ENCODE measurements at regions of chr7 and their contacts with region 1.

Region 1: DNA sequence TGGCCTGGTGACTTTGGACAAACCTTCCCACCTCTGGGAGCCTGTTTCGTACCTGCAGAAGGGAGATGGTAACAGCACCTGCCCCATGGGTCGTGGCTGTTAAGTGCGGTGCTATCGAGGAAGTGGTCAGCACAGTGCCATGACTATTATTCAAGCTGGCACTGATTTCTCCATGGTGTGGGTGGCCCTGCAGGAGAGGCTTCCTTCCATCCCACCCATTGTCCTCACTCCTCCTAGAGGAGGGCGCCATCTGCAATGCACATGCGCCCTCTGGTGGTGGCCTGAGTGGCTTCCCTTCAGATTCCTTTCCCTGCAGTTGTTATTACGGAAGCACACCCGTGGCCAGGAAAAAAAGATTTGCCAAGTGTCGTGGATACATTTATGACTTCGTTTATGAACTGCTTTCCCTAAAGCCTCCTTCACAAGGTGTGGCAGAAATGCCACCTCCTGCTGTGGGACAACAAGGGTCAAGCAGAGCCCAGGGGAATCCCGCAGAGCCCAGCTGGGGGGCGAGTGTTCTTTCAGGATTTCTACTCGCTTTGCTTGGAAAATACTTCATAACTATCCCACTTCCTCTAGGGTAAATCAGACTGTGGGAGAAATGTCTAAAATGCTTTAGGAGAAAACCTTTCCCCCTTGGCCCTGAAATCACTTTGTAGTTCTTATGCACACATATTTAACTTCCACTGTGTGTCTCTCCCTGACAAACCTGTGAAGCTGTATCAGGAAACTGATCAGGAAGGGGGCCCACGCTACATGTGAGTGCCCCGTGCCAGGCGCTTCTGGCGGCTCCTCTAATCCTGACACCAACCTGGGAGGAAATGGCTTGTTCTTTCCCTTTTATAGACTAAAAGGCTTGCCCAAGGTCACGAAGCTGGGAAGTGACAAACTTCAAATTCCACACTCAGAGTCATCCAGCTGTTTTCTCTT is 98.0 kb upstream of the ANLN start:
- DNase-seq: peak; percentile 87
- ATAC-seq: peak; percentile 53
- H3K4me3 Mint-ChIP-seq: peak overlapping the region; percentile 54
- H3K27ac Mint-ChIP-seq: peak overlapping the region; percentile 2
- H3K4me1 Mint-ChIP-seq: peaks cover 42% of the 10 kb centered on the region
- H3K27me3 Mint-ChIP-seq: no peaks in the 10 kb centered on the region

Region 2: DNA sequence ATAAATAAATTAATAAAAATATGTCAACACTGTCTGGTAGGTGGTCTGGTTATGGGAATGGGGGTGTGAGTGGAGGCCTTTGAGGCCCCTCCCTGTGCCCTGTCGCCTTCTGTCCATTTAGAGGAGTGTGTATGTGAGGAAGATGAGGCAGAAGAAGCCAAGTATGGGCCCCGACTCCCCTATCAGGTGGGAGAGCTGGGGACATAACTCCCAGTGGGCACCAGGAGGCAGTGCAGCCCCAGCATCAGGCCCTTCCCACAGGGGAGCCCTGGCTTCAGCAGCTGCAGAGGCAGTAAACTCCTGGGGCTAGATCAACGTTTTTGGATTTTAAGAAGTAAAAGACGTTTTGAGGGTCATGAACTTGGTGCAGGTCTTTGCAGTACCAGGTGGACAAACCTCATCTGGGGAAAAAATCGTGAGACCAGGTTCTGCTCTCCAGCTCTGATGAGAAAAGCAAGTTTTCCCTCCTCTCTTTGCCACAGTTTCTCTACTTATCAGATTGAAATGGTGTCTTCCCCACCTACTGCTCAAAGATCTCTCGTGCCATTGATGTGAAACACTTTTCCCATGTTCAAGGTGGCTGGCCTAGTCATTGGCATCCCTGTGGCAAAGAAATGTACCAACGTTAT is 306.4 kb before region 1 on chr7:
- CTCF ChIA-PET with region 1: interaction called, 89 read pairs
- POLR2A ChIA-PET with region 1: no interaction called
- intact Hi-C with region 1: loop called (anchors 1 kb)
- DNase-seq: peak; percentile 87
- ATAC-seq: peak; percentile 100
- H3K4me3 Mint-ChIP-seq: no peak overlapping the region
- H3K27ac Mint-ChIP-seq: no peak overlapping the region
- H3K4me1 Mint-ChIP-seq: no peaks in the 10 kb centered on the region
- H3K27me3 Mint-ChIP-seq: no peaks in the 10 kb centered on the region

Region 3: DNA sequence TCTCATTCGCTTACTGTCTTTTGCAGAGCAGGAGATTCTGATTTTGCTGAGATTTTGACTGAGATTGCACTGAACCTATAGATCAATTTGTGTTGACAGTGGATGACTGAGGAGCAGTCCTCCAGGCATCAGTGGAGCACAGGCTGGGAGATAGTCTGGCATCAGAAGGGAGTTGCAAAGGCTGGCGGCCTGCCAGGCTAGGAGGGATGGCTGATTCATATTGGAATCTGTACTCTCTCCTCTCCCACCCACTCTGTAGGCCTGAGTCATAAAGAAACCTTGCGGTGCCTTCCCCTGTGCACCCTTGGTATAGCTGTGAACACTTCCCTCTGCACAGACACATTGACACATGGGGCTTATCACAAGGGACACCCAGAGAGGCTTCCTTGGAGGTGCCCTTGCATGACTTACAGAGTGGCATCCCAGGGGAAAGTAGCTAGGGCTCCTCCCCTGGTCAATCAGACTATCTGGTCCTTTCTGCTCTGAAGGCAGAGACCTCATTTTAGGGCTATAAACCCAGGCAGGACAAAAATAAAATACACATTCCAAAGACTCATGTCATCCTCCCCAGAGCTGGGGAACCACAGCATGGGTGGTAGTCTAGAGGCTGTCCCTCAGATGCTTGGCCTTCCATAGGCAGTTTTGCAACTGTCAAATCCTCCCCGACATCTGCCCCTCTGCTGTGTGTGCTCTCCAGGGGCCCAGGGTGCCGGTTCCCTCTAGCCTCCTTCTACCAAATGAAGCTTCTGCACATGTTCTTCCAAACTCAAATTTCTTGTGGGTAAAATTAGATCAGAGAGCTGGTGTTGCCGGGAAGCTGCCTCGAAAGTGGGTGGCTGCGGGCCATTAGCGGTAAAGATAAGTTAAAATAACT is 176.0 kb before region 1 on chr7:
- CTCF ChIA-PET with region 1: interaction called, 3 read pairs
- POLR2A ChIA-PET with region 1: no interaction called
- intact Hi-C with region 1: loop called (anchors 1 to 5 kb)
- DNase-seq: peak; percentile 96
- ATAC-seq: peak; percentile 99
- H3K4me3 Mint-ChIP-seq: no peak overlapping the region
- H3K27ac Mint-ChIP-seq: peak overlapping the region; percentile 59
- H3K4me1 Mint-ChIP-seq: peaks cover 35% of the 10 kb centered on the region
- H3K27me3 Mint-ChIP-seq: peaks cover 27% of the 10 kb centered on the region

Region 4: DNA sequence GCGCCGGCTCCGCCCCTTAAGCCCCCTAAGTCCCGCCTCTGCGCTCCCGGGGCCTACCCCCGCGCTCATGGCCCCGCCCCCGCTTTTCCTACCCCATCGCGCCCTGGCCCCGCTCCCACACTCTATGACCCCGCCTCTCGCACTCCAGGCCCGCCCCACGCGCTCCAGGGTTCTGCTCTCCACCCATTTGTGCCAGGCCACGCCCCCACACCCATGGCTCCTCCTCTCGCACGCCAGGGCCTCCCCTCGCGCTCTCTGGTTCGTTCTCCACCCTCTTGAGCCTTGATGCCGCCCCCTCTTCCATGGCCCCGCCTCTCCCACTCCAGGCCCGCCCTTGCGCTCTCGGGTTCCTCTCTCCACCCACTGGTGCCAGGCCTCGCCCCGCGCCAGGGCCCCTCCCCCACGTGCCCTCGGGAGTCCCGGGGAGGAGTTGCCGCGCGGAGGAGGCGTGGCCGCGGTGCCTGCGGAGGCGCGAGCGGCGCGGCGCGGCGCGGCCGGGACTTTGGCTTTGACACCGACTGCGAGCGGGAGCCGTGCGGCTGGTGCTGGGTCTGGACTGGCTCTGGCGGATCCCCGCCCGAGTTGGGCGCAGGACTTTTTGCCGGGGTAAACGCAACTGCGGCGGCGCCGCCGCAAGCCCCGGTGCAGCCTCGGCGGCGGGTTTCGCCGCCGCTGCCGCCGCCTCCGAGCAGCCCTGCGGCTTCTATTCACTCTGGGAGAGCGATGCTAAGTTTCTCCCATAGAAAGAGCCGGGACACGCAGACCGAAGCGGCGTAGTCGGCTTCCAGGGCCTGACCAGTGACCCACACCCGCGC is 138.7 kb before region 1 on chr7 and contains the start of gene EEPD1:
- CTCF ChIA-PET with region 1: no interaction called
- POLR2A ChIA-PET with region 1: no interaction called
- intact Hi-C with region 1: loop called in 1 of 2 experiments (anchors 1 kb)
- DNase-seq: peak; percentile 100
- ATAC-seq: peak; percentile 98
- H3K4me3 Mint-ChIP-seq: peak within 1 kb of the TSS; percentile 71
- H3K27ac Mint-ChIP-seq: peak within 1 kb of the TSS; percentile 43
- H3K4me1 Mint-ChIP-seq: peaks cover 29% of the 10 kb centered on the region
- H3K27me3 Mint-ChIP-seq: no peaks in the 10 kb centered on the region
- total RNA-seq, gene EEPD1: 1.3 TPM

Region 5: GRCh38 chr7:36315309-36316133 is 23.9 kb after region 1 on chr7:
- CTCF ChIA-PET with region 1: interaction called, 13 read pairs
- POLR2A ChIA-PET with region 1: no interaction called
- intact Hi-C with region 1: no loop called
- DNase-seq: no peak
- ATAC-seq: no peak
- H3K4me3 Mint-ChIP-seq: no peak overlapping the region
- H3K27ac Mint-ChIP-seq: no peak overlapping the region
- H3K4me1 Mint-ChIP-seq: peaks cover 2% of the 10 kb centered on the region
- H3K27me3 Mint-ChIP-seq: peaks cover 2% of the 10 kb centered on the region

Measured in activated CD4-positive, alpha-beta T cell treated with anti-CD3 and anti-CD28 coated beads for 36 hours (primary cell).